HepG2 (cell line): ENCODE measurements at regions of chr16 and their contacts with region 1.

Region 1: DNA sequence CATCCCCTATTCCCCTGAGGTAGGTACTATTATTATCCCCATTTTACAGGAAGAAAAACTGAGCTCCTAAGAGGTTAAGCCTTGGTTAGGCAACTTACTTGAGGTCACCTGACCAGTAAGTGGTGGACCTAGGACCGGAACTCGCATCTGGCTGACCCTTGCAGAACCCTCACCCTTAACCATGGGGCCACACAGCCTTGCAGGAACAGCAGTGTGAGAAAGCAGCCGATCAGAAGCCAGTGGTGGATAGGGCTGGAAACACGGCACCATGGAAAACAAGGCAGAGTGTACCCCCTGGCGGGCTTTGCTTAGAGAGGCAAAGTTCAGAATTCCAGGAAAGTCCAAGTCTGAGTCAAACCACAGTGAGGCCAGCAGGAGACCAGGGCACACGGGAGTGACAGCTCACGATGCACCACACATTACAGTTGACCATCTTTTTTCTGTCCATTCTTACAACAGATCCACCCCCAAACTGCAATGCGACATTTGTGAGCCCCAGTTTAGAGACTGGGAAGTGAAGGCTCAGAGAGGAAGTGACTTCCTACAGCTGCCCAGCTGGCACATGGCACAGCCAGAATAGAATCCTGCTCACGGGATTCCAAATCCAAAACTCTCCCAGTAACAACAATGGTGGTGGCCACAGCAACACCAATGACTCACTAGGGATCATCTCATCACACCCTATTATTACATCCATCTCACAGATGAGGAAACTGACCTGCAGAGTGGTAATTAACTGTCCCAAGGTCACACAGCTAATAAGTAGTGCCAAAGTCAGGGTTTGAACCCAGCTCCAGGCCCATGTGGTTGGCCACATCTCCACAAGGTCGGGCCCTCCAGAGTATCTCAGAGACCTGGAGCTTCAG is 20.3 kb downstream of the KIFC3 start:
- DNase-seq: peak; percentile 94
- ATAC-seq: peak; percentile 90
- H3K4me3 ChIP-seq: peak overlapping the region in 1 of 3 experiments; percentile 38; a peak in 3 of 6 replicates
- H3K27ac ChIP-seq: peak overlapping the region; percentile 81
- H3K4me1 ChIP-seq: peaks cover 53% of the 10 kb centered on the region
- H3K27me3 ChIP-seq: no peaks in the 10 kb centered on the region
- CTCF ChIP-seq: peak; percentile 93
- EP300 ChIP-seq: peak; percentile 53 to 82; a peak in 2 of 4 replicates
- POLR2A ChIP-seq: peak; percentile 51 to 72; a peak in 3 of 4 replicates
- RAD21 ChIP-seq: peak; percentile 88

Region 2: DNA sequence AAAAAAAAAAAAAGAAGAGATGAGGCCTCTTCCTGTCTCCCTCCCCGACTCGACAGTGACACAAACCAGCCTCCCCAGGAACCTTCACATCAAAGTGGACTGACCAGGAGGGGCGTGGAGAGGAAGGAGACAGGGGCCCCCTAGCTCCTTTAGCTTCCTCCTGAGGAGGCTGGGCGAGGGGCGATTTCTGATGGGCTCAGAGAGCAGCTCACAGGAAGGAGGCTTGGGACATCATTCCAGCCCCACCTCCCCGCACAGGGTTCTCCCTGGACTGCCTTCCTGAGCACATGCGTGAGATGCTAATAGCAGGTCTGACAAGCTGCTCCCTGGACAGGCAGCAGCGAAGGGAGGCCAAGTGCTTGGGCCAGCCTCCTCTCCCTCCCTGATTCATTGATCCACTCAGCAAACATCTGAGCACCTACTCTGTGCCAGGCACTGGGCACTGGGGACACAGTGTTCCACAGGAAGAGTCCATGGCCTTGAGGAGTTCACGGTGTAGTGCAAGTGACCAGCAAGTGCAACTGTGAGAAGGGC is 281.3 kb before region 1 on chr16:
- CTCF ChIA-PET with region 1: no interaction called
- POLR2A ChIA-PET with region 1: no interaction called
- in situ Hi-C with region 1: no loop called
- intact Hi-C with region 1: no loop called
- DNase-seq: no peak
- ATAC-seq: peak; percentile 69
- H3K4me3 ChIP-seq: peak overlapping the region in 1 of 3 experiments; percentile 47; a peak in 1 of 6 replicates
- H3K27ac ChIP-seq: no peak overlapping the region
- H3K4me1 ChIP-seq: peaks cover 36% of the 10 kb centered on the region
- H3K27me3 ChIP-seq: peaks cover 5 to 54% of the 10 kb centered on the region in 2 experiments; a peak in 4 of 5 replicates
- CTCF ChIP-seq: no peak
- EP300 ChIP-seq: no peak
- POLR2A ChIP-seq: no peak
- RAD21 ChIP-seq: no peak

Region 3: GRCh38 chr16:57720142-57720575 is 61.8 kb before region 1 on chr16:
- CTCF ChIA-PET with region 1: interaction called, 3 read pairs
- POLR2A ChIA-PET with region 1: no interaction called
- in situ Hi-C with region 1: no loop called
- intact Hi-C with region 1: loop called (anchors 5 kb)
- DNase-seq: peak; percentile 72
- ATAC-seq: peak; percentile 96
- H3K4me3 ChIP-seq: no peak overlapping the region
- H3K27ac ChIP-seq: no peak overlapping the region
- H3K4me1 ChIP-seq: peaks cover 29% of the 10 kb centered on the region
- H3K27me3 ChIP-seq: no peaks in the 10 kb centered on the region
- CTCF ChIP-seq: peak; percentile 98
- EP300 ChIP-seq: 0 out of 4 replicates have a peak, but pooled peaks of 1 of the 2 experiments have one; percentile 10
- POLR2A ChIP-seq: no peak
- RAD21 ChIP-seq: peak; percentile 98

Region 4: GRCh38 chr16:57795431-57795878 is 13.5 kb after region 1 on chr16:
- CTCF ChIA-PET with region 1: interaction called, 4 read pairs
- POLR2A ChIA-PET with region 1: interaction called, 141 read pairs
- in situ Hi-C with region 1: no loop called
- intact Hi-C with region 1: loop called (anchors 1 kb)
- DNase-seq: peak; percentile 73
- ATAC-seq: peak; percentile 3; the same call in 1 of the 3 replicates
- H3K4me3 ChIP-seq: no peak overlapping the region; a peak in 1 of 6 replicates
- H3K27ac ChIP-seq: no peak overlapping the region
- H3K4me1 ChIP-seq: peaks cover 67% of the 10 kb centered on the region
- H3K27me3 ChIP-seq: no peaks in the 10 kb centered on the region
- CTCF ChIP-seq: peak; percentile 73
- EP300 ChIP-seq: no peak
- POLR2A ChIP-seq: no peak
- RAD21 ChIP-seq: peak; percentile 76

Region 5: GRCh38 chr16:57810197-57811031 is 28.4 kb after region 1 on chr16:
- CTCF ChIA-PET with region 1: no interaction called
- POLR2A ChIA-PET with region 1: interaction called, 23 read pairs
- in situ Hi-C with region 1: no loop called
- intact Hi-C with region 1: no loop called
- DNase-seq: peak; percentile 92
- ATAC-seq: peak; percentile 93
- H3K4me3 ChIP-seq: peak overlapping the region in 1 of 3 experiments; percentile 41; a peak in 2 of 6 replicates
- H3K27ac ChIP-seq: peak overlapping the region; percentile 63
- H3K4me1 ChIP-seq: peaks cover 71% of the 10 kb centered on the region
- H3K27me3 ChIP-seq: no peaks in the 10 kb centered on the region
- CTCF ChIP-seq: peak; percentile 26; the same call in 1 of the 2 replicates
- EP300 ChIP-seq: peak in 1 of 2 experiments; percentile 80; a peak in 2 of 4 replicates
- POLR2A ChIP-seq: peak; percentile 40 to 85; a peak in 3 of 4 replicates
- RAD21 ChIP-seq: no peak

Region 6: GRCh38 chr16:57837305-57838125 is 55.5 kb after region 1 on chr16:
- CTCF ChIA-PET with region 1: no interaction called
- POLR2A ChIA-PET with region 1: interaction called, 4 read pairs
- in situ Hi-C with region 1: no loop called
- intact Hi-C with region 1: loop called (anchors 2 kb)
- DNase-seq: no peak
- ATAC-seq: no peak
- H3K4me3 ChIP-seq: no peak overlapping the region
- H3K27ac ChIP-seq: no peak overlapping the region
- H3K4me1 ChIP-seq: peaks cover 50% of the 10 kb centered on the region
- H3K27me3 ChIP-seq: no peaks in the 10 kb centered on the region
- CTCF ChIP-seq: no peak
- EP300 ChIP-seq: no peak
- POLR2A ChIP-seq: no peak
- RAD21 ChIP-seq: no peak

Region 7: GRCh38 chr16:57893559-57894389 is 111.8 kb after region 1 on chr16:
- CTCF ChIA-PET with region 1: no interaction called
- POLR2A ChIA-PET with region 1: interaction called, 48 read pairs
- in situ Hi-C with region 1: no loop called
- intact Hi-C with region 1: no loop called
- DNase-seq: peak; percentile 99
- ATAC-seq: peak; percentile 65
- H3K4me3 ChIP-seq: peak overlapping the region; percentile 52 to 71 (median 62)
- H3K27ac ChIP-seq: peak overlapping the region; percentile 95
- H3K4me1 ChIP-seq: peaks cover 94% of the 10 kb centered on the region
- H3K27me3 ChIP-seq: no peaks in the 10 kb centered on the region; a peak in 1 of 5 replicates
- CTCF ChIP-seq: no peak
- EP300 ChIP-seq: peak; percentile 83 to 95
- POLR2A ChIP-seq: peak; percentile 13 to 59; a peak in 3 of 4 replicates
- RAD21 ChIP-seq: no peak